ENCODE measurements at regions of chr7 and their contacts with region 1.

Region 1: DNA sequence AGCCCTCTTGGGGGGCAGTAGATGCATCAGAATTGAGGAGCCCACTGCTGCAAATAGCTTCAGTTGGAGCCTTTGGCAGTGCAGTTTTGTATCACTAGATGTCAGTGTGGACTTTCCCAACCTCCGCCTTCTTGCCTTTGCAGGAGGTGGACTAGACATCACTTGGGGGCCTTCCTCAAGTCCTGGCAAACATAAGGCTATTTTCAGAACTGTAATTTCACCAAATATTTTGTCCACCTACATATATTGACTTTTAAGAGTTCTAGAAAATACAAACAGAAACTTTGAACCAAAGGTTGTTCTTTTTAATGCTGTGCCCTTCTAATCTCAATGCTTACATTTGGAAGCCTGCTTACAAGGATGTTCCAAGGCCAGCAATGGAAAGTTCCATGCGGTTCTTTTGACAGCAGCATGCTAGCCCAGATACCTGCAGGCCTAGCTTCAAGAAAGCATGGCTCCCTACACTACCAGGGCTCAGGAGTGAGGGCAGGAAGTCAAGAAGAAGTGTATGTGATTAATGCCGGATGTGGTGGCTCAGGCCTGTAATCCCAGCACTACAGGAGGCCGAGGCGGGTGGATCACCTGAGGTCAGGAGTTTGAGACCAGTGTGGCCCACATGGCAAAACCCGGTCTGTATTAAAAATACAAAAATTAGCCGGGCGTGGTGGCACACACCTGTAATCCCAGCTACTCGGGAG is 8.0 kb upstream of the ZNRF2 start:
- DNase-seq: no peak
- H3K4me3 ChIP-seq: no peak overlapping the region
- CTCF ChIP-seq: peak in 1 of 3 donors; percentile 24
- POLR2A ChIP-seq: no peak

Region 2: GRCh38 chr7:29871787-29872396 is 404.5 kb before region 1 on chr7:
- intact Hi-C with region 1: loop called (anchors 5 kb)
- DNase-seq: no peak
- H3K4me3 ChIP-seq: no peak overlapping the region
- CTCF ChIP-seq: no peak
- POLR2A ChIP-seq: no peak

Region 3: DNA sequence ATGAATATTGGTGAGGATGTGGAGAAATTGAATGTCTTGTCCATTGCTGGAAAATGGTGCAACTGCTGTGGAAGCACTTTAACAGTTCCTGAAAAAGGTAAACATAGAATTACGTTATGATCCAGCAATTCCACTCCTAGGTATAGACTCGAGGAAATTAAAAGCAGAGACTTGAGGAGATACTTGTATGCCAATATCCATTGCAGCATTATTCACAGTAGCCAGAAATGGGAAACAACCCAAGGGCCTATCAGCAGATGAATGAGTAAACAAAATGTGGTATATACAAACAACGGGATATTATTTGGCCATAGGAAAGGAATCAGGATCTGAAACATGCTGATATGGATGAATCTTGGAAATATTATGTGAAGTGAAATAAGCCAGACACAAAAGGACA is 174.1 kb before region 1 on chr7:
- intact Hi-C with region 1: no loop called
- DNase-seq: no peak
- H3K4me3 ChIP-seq: no peak overlapping the region
- CTCF ChIP-seq: no peak
- POLR2A ChIP-seq: no peak